Endothelial cell of umbilical vein (primary cell): ENCODE measurements at regions of chr5 and their contacts with region 1.

Region 1: GRCh38 chr5:91383027-91383955 is at the start of gene ARRDC3:
- DNase-seq: peak; percentile 98
- H3K4me3 ChIP-seq: peak within 1 kb of the TSS; percentile 89 to 99 (median 90)
- H3K27ac ChIP-seq: peak within 1 kb of the TSS; percentile 96
- H3K4me1 ChIP-seq: peaks cover 17% of the 10 kb centered on the region
- H3K27me3 ChIP-seq: no peaks in the 10 kb centered on the region
- CTCF ChIP-seq: no peak
- POLR2A ChIP-seq: peak; percentile 99
- total RNA-seq, gene ARRDC3: 35.3 and 43.1 TPM in 2 replicates

Region 2: GRCh38 chr5:90802474-90803317 is 580.6 kb before region 1 on chr5:
- CTCF ChIA-PET with region 1: interaction called, 46 read pairs
- POLR2A ChIA-PET with region 1: no interaction called
- dilution Hi-C with region 1: no loop called
- intact Hi-C with region 1: no loop called
- DNase-seq: peak; percentile 55
- H3K4me3 ChIP-seq: no peak overlapping the region
- H3K27ac ChIP-seq: no peak overlapping the region
- H3K4me1 ChIP-seq: no peaks in the 10 kb centered on the region
- H3K27me3 ChIP-seq: peaks cover 0 to 4% of the 10 kb centered on the region in 2 experiments
- CTCF ChIP-seq: peak; percentile 66 to 71
- POLR2A ChIP-seq: no peak

Region 3: DNA sequence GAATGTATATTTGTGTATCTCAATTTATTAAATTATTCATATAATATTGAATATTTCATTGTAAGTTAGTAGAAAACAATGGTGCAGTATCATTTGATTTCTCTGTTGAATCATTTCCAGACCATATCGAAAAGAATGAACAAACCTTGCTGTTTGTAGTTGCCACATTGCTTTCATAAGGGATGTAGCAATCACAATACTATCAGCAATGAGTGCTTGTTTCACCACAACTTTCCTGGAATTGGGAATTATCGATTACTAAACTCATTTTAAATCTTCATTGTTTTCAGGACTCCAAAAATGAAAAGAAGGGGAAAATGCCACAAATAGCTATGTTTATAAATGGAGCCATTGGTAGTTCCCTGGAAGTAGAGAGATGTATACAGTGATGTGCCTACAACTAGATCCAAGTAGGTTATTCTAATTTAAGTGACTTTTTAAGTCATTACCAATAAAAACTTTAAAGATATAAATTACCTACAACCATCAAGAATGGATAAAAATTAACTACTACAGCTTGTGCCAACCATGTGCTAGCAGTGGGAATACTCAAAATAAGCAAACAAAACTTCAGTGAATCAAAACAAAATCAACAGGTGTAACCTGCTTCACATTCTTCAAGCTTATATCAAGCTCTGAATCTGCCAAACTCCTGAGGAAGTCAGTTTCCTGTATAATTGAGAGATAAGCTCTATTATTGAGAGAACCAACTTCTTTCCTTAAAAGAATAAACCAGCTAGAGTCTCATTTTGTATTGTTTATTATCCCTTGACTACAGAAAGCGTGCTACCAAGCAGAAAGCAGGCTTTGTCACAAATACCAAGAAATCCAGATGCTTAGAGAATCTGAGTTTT is 466.1 kb before region 1 on chr5:
- CTCF ChIA-PET with region 1: interaction called, 15 read pairs
- POLR2A ChIA-PET with region 1: no interaction called
- dilution Hi-C with region 1: no loop called
- intact Hi-C with region 1: no loop called
- DNase-seq: peak; percentile 79
- H3K4me3 ChIP-seq: no peak overlapping the region
- H3K27ac ChIP-seq: no peak overlapping the region
- H3K4me1 ChIP-seq: peaks cover 7% of the 10 kb centered on the region
- H3K27me3 ChIP-seq: no peaks in the 10 kb centered on the region
- CTCF ChIP-seq: no peak
- POLR2A ChIP-seq: no peak

Region 4: GRCh38 chr5:91095313-91095712 is 288.0 kb before region 1 on chr5:
- CTCF ChIA-PET with region 1: interaction called, 22 read pairs
- POLR2A ChIA-PET with region 1: no interaction called
- dilution Hi-C with region 1: no loop called
- intact Hi-C with region 1: no loop called
- DNase-seq: peak; percentile 58
- H3K4me3 ChIP-seq: no peak overlapping the region
- H3K27ac ChIP-seq: no peak overlapping the region
- H3K4me1 ChIP-seq: no peaks in the 10 kb centered on the region
- H3K27me3 ChIP-seq: no peaks in the 10 kb centered on the region
- CTCF ChIP-seq: no peak
- POLR2A ChIP-seq: no peak

Region 5: GRCh38 chr5:91183737-91184136 is 199.6 kb before region 1 on chr5:
- CTCF ChIA-PET with region 1: interaction called, 18 read pairs
- POLR2A ChIA-PET with region 1: no interaction called
- dilution Hi-C with region 1: no loop called
- intact Hi-C with region 1: no loop called
- DNase-seq: no peak
- H3K4me3 ChIP-seq: no peak overlapping the region
- H3K27ac ChIP-seq: no peak overlapping the region
- H3K4me1 ChIP-seq: no peaks in the 10 kb centered on the region
- H3K27me3 ChIP-seq: no peaks in the 10 kb centered on the region
- CTCF ChIP-seq: no peak
- POLR2A ChIP-seq: no peak

Region 6: DNA sequence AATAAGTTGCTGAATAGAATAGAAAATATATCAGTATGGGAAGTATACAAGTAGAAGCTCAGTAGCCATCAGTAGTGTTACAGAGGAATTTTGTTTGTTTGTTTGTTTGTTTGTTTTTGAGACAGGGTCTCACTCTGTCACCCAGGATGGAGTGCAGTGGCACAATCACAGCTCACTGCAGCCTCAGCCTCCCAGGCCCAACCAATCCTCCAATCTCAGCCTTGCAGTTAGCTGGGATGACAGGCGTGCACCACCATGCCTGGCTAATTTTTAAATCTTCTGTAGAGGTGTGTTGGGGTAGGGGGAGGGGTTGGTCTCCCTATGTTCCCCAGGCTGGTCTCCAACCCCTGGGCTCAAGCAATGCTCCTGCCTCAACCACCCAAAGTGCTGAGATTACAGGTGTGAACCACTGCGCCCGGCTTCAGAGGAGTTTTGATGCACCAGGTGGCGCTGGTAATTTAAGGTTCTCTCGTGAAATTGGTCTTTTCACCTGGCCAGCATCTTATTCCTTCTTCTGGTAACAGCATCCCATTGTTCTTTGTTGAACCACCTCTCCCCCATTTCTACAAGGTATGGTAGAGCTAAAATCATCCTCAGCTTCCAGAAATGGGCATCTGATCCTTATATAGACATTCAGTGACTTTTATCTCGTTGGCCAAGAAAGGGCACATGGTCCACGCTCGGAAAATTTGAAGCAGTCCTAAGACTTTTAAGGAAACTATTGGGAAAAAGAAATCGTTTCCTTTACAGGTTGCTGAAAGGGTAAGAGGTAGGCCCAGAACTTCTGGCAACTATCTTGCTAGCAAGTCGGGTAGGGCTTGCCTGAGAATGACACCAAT is 157.2 kb before region 1 on chr5:
- CTCF ChIA-PET with region 1: interaction called, 216 read pairs
- POLR2A ChIA-PET with region 1: interaction called, 7 read pairs
- dilution Hi-C with region 1: no loop called
- intact Hi-C with region 1: loop called (anchors 1 kb)
- DNase-seq: no peak
- H3K4me3 ChIP-seq: no peak overlapping the region
- H3K27ac ChIP-seq: no peak overlapping the region
- H3K4me1 ChIP-seq: no peaks in the 10 kb centered on the region
- H3K27me3 ChIP-seq: no peaks in the 10 kb centered on the region
- CTCF ChIP-seq: peak in 1 of 2 donors; percentile 14
- POLR2A ChIP-seq: no peak

Region 7: DNA sequence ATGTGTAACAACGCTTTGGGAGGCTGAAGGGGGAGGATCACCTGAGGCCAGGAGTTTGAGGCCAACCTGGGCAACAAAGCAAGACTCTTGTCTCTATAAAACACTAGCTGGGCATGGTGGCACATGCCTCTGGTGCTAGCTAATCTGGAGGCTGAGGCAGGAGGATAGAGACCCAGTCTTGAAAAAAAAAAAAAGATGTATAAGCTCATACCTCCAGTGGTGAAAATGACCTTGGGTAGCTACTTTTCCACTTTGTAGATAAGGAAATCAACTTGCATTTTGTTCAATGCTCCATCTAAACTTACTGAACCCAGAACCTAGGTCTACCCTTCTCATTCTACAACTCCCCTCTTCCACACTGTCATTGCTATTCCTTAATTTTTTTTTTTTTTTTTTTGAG is 16.7 kb before region 1 on chr5:
- CTCF ChIA-PET with region 1: interaction called, 14 read pairs
- POLR2A ChIA-PET with region 1: interaction called, 9 read pairs
- dilution Hi-C with region 1: no loop called
- intact Hi-C with region 1: no loop called
- DNase-seq: peak; percentile 45
- H3K4me3 ChIP-seq: no peak overlapping the region
- H3K27ac ChIP-seq: no peak overlapping the region
- H3K4me1 ChIP-seq: no peaks in the 10 kb centered on the region
- H3K27me3 ChIP-seq: no peaks in the 10 kb centered on the region
- CTCF ChIP-seq: no peak
- POLR2A ChIP-seq: no peak